ENCODE measurements at regions of chr4 and their contacts with region 1.

Region 1: GRCh38 chr4:8035371-8035780 is 95.7 kb upstream of the AFAP1 start:
- DNase-seq: peak; percentile 79
- H3K4me3 ChIP-seq: no peak overlapping the region
- H3K27ac ChIP-seq: no peak overlapping the region
- H3K4me1 ChIP-seq: peaks cover 22% of the 10 kb centered on the region
- H3K27me3 ChIP-seq: peaks cover 3% of the 10 kb centered on the region
- CTCF ChIP-seq: no peak

Region 2: GRCh38 chr4:8158710-8159536 is 123.5 kb after region 1 on chr4 and contains the start of gene ABLIM2:
- CTCF ChIA-PET with region 1: no interaction called
- dilution Hi-C with region 1: no loop called
- in situ Hi-C with region 1: no loop called
- intact Hi-C with region 1: loop called (anchors 10 kb)
- DNase-seq: peak; percentile 92
- H3K4me3 ChIP-seq: peak within 1 kb of the TSS; percentile 70 to 99 (median 95)
- H3K27ac ChIP-seq: peak within 1 kb of the TSS; percentile 35
- H3K4me1 ChIP-seq: peaks cover 23% of the 10 kb centered on the region
- H3K27me3 ChIP-seq: peaks cover 5% of the 10 kb centered on the region
- CTCF ChIP-seq: no peak
- total RNA-seq, gene ABLIM2: 0.28 to 0.67 TPM

Measured in mammary epithelial cell (primary cell).